ENCODE measurements at regions of chr13 and their contacts with region 1.

Region 1: GRCh38 chr13:110644892-110645521 is 29.7 kb downstream of the NAXD start:
- DNase-seq: peak; percentile 85
- ATAC-seq: peak; percentile 95
- H3K4me3 ChIP-seq: peak overlapping the region in 2 of 5 experiments; percentile 23 to 39
- H3K4me3 Mint-ChIP-seq: peak overlapping the region; percentile 57
- H3K27ac ChIP-seq: no peak overlapping the region
- H3K27ac Mint-ChIP-seq: peak overlapping the region; percentile 71
- H3K4me1 ChIP-seq: peaks cover 19 to 23% of the 10 kb centered on the region in 2 donors
- H3K4me1 Mint-ChIP-seq: peaks cover 24% of the 10 kb centered on the region
- H3K27me3 ChIP-seq: no peaks in the 10 kb centered on the region
- H3K27me3 Mint-ChIP-seq: no peaks in the 10 kb centered on the region
- CTCF ChIP-seq: peak; percentile 71

Region 2: DNA sequence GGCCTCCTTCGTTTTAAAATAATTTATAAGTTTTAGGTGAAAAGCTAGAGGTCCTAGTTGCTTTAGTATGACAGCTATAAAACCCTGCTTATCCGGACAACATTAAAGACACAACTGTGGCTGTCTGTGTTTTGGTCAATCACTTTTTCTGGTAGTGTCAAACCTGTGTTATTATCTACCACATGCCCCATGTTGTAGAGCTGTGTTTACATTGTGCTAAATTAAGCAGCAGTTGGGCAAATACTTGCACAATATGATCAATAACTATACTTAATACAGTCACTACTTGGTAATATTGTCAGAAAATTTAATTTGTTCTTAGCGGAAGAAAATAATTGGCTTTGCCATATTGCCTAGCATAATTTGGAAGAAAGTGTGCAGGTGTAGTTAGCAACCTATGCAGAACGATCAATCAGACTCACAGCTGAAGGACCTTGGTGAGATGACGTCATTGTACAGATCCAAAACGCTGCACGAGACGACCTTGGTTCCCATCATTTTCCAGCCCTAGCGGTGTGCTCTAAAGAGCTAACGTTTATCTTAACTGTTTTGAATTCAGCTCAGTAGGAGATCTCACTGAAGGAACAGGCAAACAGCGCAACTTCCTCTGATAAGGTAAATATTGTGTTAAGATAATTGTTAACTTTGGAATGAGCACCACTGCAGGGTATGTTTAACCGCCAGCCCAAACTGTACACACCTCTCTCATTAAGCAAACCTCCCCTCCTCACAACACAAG is 1335.2 kb before region 1 on chr13:
- CTCF ChIA-PET with region 1: no interaction called
- POLR2A ChIA-PET with region 1: no interaction called
- intact Hi-C with region 1: no loop called
- DNase-seq: no peak
- ATAC-seq: no peak
- H3K4me3 ChIP-seq: no peak overlapping the region
- H3K4me3 Mint-ChIP-seq: no peak overlapping the region
- H3K27ac ChIP-seq: no peak overlapping the region
- H3K27ac Mint-ChIP-seq: no peak overlapping the region
- H3K4me1 ChIP-seq: no peaks in the 10 kb centered on the region
- H3K4me1 Mint-ChIP-seq: no peaks in the 10 kb centered on the region
- H3K27me3 ChIP-seq: no peaks in the 10 kb centered on the region
- H3K27me3 Mint-ChIP-seq: peaks cover 3% of the 10 kb centered on the region
- CTCF ChIP-seq: no peak

Region 3: GRCh38 chr13:109331898-109332297 is 1313.1 kb before region 1 on chr13:
- CTCF ChIA-PET with region 1: no interaction called
- POLR2A ChIA-PET with region 1: no interaction called
- intact Hi-C with region 1: no loop called
- DNase-seq: no peak
- ATAC-seq: no peak
- H3K4me3 ChIP-seq: no peak overlapping the region
- H3K4me3 Mint-ChIP-seq: no peak overlapping the region
- H3K27ac ChIP-seq: no peak overlapping the region
- H3K27ac Mint-ChIP-seq: no peak overlapping the region
- H3K4me1 ChIP-seq: no peaks in the 10 kb centered on the region
- H3K4me1 Mint-ChIP-seq: no peaks in the 10 kb centered on the region
- H3K27me3 ChIP-seq: no peaks in the 10 kb centered on the region
- H3K27me3 Mint-ChIP-seq: no peaks in the 10 kb centered on the region
- CTCF ChIP-seq: no peak

Region 4: DNA sequence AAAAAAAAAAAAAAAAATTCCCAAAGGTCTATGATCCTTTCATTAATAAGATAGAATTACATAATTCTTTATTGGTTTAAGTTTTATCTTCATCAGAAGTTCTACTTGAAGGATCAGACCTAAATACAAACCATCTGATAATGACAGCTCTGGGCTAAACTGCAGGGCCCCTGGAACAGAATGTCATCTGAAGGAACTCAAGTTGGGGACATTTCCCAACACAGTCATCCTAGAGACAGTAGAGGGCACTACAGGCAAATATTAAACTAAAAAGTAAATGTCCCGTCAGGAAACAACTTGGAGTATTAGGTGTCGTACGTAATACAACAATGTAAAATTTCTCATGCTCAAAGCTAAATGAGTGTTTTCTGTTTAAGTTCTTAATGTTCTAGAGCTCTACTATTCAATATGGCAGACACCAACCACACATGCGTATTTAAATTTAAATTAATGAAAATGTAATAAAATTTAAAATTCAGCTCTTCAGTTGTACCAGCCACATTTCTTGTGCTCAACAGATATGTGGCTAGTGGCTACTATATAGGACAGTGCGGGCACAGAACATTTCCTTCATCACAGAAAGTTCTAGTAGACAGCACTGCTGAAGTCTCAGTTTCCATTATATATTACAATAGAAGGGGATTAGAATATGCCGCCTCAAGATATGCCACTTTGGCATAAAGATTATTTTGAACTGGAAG is 51.4 kb before region 1 on chr13:
- CTCF ChIA-PET with region 1: interaction called, 11 read pairs
- POLR2A ChIA-PET with region 1: no interaction called
- intact Hi-C with region 1: no loop called
- DNase-seq: peak; percentile 64
- ATAC-seq: peak; percentile 68
- H3K4me3 ChIP-seq: no peak overlapping the region
- H3K4me3 Mint-ChIP-seq: no peak overlapping the region
- H3K27ac ChIP-seq: no peak overlapping the region
- H3K27ac Mint-ChIP-seq: no peak overlapping the region
- H3K4me1 ChIP-seq: no peaks in the 10 kb centered on the region
- H3K4me1 Mint-ChIP-seq: peaks cover 4% of the 10 kb centered on the region
- H3K27me3 ChIP-seq: no peaks in the 10 kb centered on the region
- H3K27me3 Mint-ChIP-seq: no peaks in the 10 kb centered on the region
- CTCF ChIP-seq: peak; percentile 61

Region 5: GRCh38 chr13:110705826-110706569 is 61.0 kb after region 1 on chr13 and contains the start of gene CARS2:
- CTCF ChIA-PET with region 1: interaction called, 16 read pairs
- POLR2A ChIA-PET with region 1: interaction called, 3 read pairs
- intact Hi-C with region 1: no loop called
- DNase-seq: peak; percentile 98
- ATAC-seq: peak; percentile 95
- H3K4me3 ChIP-seq: peak within 1 kb of the TSS; percentile 63 to 73 (median 72)
- H3K4me3 Mint-ChIP-seq: peak within 1 kb of the TSS; percentile 96
- H3K27ac ChIP-seq: peak within 1 kb of the TSS; percentile 53 to 66
- H3K27ac Mint-ChIP-seq: peak within 1 kb of the TSS; percentile 91
- H3K4me1 ChIP-seq: peaks cover 21 to 32% of the 10 kb centered on the region in 2 donors
- H3K4me1 Mint-ChIP-seq: peaks cover 40% of the 10 kb centered on the region
- H3K27me3 ChIP-seq: no peaks in the 10 kb centered on the region
- H3K27me3 Mint-ChIP-seq: no peaks in the 10 kb centered on the region
- CTCF ChIP-seq: peak; percentile 40
- total RNA-seq, gene CARS2: 154 and 168 TPM in 2 replicates

Region 6: GRCh38 chr13:110715395-110716235 is 70.6 kb after region 1 on chr13:
- CTCF ChIA-PET with region 1: interaction called, 18 read pairs
- POLR2A ChIA-PET with region 1: interaction called, 32 read pairs
- intact Hi-C with region 1: loop called (anchors 1 kb)
- DNase-seq: peak; percentile 99
- ATAC-seq: peak; percentile 56
- H3K4me3 ChIP-seq: peak overlapping the region; percentile 89 to 100 (median 100)
- H3K4me3 Mint-ChIP-seq: peak overlapping the region; percentile 96
- H3K27ac ChIP-seq: peak overlapping the region; percentile 82 to 86
- H3K27ac Mint-ChIP-seq: peak overlapping the region; percentile 96
- H3K4me1 ChIP-seq: peaks cover 28 to 30% of the 10 kb centered on the region in 2 donors
- H3K4me1 Mint-ChIP-seq: peaks cover 35% of the 10 kb centered on the region
- H3K27me3 ChIP-seq: no peaks in the 10 kb centered on the region
- H3K27me3 Mint-ChIP-seq: no peaks in the 10 kb centered on the region
- CTCF ChIP-seq: peak; percentile 30

Region 7: GRCh38 chr13:110819203-110820014 is 174.4 kb after region 1 on chr13:
- CTCF ChIA-PET with region 1: interaction called, 64 read pairs
- POLR2A ChIA-PET with region 1: interaction called, 3 read pairs
- intact Hi-C with region 1: loop called (anchors 1 kb)
- DNase-seq: peak; percentile 82
- ATAC-seq: peak; percentile 84
- H3K4me3 ChIP-seq: no peak overlapping the region
- H3K4me3 Mint-ChIP-seq: no peak overlapping the region
- H3K27ac ChIP-seq: no peak overlapping the region
- H3K27ac Mint-ChIP-seq: no peak overlapping the region
- H3K4me1 ChIP-seq: peaks cover 0 to 7% of the 10 kb centered on the region in 2 donors
- H3K4me1 Mint-ChIP-seq: peaks cover 3% of the 10 kb centered on the region
- H3K27me3 ChIP-seq: peaks cover 0 to 3% (median 0%) of the 10 kb centered on the region in 4 experiments
- H3K27me3 Mint-ChIP-seq: peaks cover 8% of the 10 kb centered on the region
- CTCF ChIP-seq: peak; percentile 99